Heart right ventricle (tissue), 16 donors: ENCODE measurements at regions of chr4 and their contacts with region 1.

Region 1: GRCh38 chr4:23572382-23572781 is 317.5 kb downstream of the PPARGC1A start:
- DNase-seq: no peak
- ATAC-seq: no peak
- H3K4me3 ChIP-seq: no peak overlapping the region
- H3K27ac ChIP-seq: no peak overlapping the region
- H3K4me1 ChIP-seq: no peaks in the 10 kb centered on the region
- H3K27me3 ChIP-seq: no peaks in the 10 kb centered on the region
- CTCF ChIP-seq: no peak

Region 2: GRCh38 chr4:23539969-23540592 is 32.3 kb before region 1 on chr4:
- intact Hi-C with region 1: loop called in 1 of 10 experiments (anchors 1 kb)
- DNase-seq: no peak
- ATAC-seq: no peak
- H3K4me3 ChIP-seq: no peak overlapping the region
- H3K27ac ChIP-seq: no peak overlapping the region
- H3K4me1 ChIP-seq: no peaks in the 10 kb centered on the region
- H3K27me3 ChIP-seq: no peaks in the 10 kb centered on the region
- CTCF ChIP-seq: no peak